Posterior vena cava (tissue), 2 donors: ENCODE measurements at regions of chr6 and their contacts with region 1.

Region 1: DNA sequence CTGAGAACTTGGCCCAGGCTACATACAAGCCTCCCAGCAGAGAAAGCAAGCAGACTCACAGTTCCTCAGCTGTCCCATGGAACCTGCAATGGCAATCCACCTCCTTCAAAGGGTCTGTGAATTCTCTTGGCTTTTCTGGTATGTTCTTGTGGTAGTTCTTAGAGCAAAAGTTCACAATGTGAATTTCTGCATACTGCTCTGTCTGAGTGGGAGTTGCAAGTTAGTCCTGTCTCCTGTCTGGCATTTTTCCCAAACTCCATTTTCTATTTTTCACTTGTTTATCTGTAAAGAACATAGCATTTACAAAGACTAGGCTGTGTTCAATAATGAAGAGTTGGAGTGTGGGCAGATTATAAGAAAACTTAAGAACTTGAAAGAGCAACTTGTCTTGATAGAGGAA is 269.9 kb downstream of the BCKDHB start:
- DNase-seq: no peak

Region 2: GRCh38 chr6:80425089-80425823 is 48.8 kb after region 1 on chr6:
- intact Hi-C with region 1: loop called in 1 of 2 experiments (anchors 10 kb)
- DNase-seq: no peak

Region 3: DNA sequence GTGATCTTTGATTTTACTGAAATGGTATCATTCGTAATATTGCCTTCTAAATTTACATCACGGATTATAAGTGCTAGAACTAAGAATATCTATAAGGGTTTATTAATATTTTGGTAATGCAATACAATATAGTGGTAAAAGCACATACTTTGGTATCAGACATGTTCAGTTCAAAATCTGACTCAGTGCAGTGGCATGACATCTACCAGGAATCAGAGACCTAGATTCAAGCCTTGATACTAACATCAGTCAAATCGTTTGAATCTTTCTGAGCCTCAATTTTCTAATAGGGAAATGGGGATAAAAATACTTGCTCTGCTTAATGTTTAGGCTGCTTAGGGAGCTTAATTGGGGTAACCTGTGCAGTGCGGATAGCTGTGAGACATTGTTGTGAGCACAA is 218.1 kb after region 1 on chr6:
- intact Hi-C with region 1: no loop called
- DNase-seq: no peak